ENCODE measurements at regions of chr18 and their contacts with region 1.

Region 1: GRCh38 chr18:11040823-11041656 is 108.3 kb downstream of the PIEZO2 start:
- DNase-seq: peak; percentile 60
- ATAC-seq: peak; percentile 82
- H3K4me3 Mint-ChIP-seq: no peak overlapping the region
- H3K27ac Mint-ChIP-seq: no peak overlapping the region
- H3K4me1 Mint-ChIP-seq: peaks cover 12% of the 10 kb centered on the region
- H3K27me3 Mint-ChIP-seq: no peaks in the 10 kb centered on the region
- CTCF ChIP-seq: peak; percentile 50

Region 2: GRCh38 chr18:10851824-10852319 is 189.2 kb before region 1 on chr18:
- CTCF ChIA-PET with region 1: interaction called, 25 read pairs
- POLR2A ChIA-PET with region 1: interaction called, 3 read pairs
- DNase-seq: no peak
- ATAC-seq: no peak
- H3K4me3 Mint-ChIP-seq: no peak overlapping the region
- H3K27ac Mint-ChIP-seq: no peak overlapping the region
- H3K4me1 Mint-ChIP-seq: peaks cover 63% of the 10 kb centered on the region
- H3K27me3 Mint-ChIP-seq: no peaks in the 10 kb centered on the region
- CTCF ChIP-seq: peak; percentile 53

Region 3: GRCh38 chr18:11027862-11028261 is 13.2 kb before region 1 on chr18:
- CTCF ChIA-PET with region 1: interaction called, 12 read pairs
- POLR2A ChIA-PET with region 1: interaction called, 3 read pairs
- DNase-seq: no peak
- ATAC-seq: no peak
- H3K4me3 Mint-ChIP-seq: no peak overlapping the region
- H3K27ac Mint-ChIP-seq: no peak overlapping the region
- H3K4me1 Mint-ChIP-seq: peaks cover 5% of the 10 kb centered on the region; the same call in 1 of the 2 replicates
- H3K27me3 Mint-ChIP-seq: no peaks in the 10 kb centered on the region
- CTCF ChIP-seq: no peak

Region 4: DNA sequence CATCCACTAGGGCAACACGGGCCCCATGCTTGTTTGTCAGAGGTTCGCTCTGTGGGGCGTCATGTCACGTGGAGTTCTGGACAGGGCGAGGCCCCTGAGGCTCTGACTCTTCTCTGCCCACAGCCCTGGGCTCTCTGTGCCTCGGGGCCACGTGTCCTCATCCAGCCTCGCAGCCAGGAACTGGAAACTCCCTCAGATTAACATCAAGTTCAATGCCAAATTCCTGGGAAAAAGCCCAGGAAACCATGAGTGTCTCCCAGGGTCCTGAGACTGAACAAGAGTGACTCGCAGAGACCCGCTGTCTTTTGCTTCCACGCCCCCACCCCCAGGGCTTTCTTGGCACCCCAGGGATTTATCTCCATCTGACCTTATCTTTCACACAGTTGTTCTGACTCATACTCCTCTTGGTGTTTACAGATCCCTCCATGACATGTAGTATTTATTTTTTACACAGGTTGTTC is 282.3 kb after region 1 on chr18:
- CTCF ChIA-PET with region 1: no interaction called
- POLR2A ChIA-PET with region 1: no interaction called
- DNase-seq: no peak
- ATAC-seq: no peak
- H3K4me3 Mint-ChIP-seq: no peak overlapping the region
- H3K27ac Mint-ChIP-seq: no peak overlapping the region
- H3K4me1 Mint-ChIP-seq: no peaks in the 10 kb centered on the region
- H3K27me3 Mint-ChIP-seq: no peaks in the 10 kb centered on the region
- CTCF ChIP-seq: no peak

Measured in WTC11 (cell line).